Endothelial cell of umbilical vein (primary cell): ENCODE measurements at regions of chr6 and their contacts with region 1.

Region 1: DNA sequence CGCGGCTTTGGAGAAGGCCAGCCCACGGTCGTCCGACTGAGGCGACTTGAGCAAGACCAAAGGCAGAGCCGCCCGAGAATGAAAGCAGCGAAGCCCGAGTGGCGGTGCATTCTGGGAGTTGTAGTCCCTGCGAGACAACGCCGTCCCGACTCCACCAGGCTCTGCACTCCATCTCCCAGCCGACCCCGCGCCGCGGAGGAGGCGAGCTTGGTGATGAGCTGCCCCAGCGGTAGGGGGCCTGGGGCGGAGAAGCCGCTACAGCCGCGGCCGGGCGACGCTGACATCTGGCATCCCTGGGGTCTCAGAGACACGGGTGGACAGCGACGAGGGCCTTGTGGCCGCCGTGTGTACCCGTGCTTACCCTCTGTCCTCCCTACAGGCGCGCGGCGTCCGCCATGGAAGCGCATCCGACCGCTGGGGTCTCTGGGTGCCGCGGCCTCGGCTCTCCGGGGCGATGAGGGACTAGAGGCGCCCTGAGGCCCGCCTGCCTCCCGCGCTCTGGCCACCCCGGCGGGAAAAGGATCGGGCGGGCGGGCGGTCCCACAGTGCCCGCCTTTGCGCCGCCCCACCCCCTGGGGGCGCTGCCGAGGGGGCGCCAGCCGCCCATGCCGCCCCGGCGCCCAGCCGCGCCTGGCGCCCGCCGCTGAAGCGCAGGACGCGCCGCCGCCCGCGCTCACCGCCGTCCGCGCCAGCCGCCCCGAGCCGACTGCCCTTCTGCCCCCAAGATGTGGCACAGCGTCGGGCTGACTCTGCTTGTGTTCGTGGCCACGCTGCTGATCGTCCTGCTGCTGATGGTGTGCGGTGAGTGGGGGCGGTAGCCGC is at the start of gene SMIM13:
- DNase-seq: peak; percentile 99
- H3K4me3 ChIP-seq: peak within 1 kb of the TSS; percentile 54 to 98 (median 86)
- H3K27ac ChIP-seq: peak within 1 kb of the TSS; percentile 87
- H3K4me1 ChIP-seq: peaks cover 18% of the 10 kb centered on the region
- H3K27me3 ChIP-seq: no peaks in the 10 kb centered on the region
- CTCF ChIP-seq: peak; percentile 38 to 47
- POLR2A ChIP-seq: peak; percentile 68
- total RNA-seq, gene SMIM13: 14.7 and 19.4 TPM in 2 replicates

Region 2: DNA sequence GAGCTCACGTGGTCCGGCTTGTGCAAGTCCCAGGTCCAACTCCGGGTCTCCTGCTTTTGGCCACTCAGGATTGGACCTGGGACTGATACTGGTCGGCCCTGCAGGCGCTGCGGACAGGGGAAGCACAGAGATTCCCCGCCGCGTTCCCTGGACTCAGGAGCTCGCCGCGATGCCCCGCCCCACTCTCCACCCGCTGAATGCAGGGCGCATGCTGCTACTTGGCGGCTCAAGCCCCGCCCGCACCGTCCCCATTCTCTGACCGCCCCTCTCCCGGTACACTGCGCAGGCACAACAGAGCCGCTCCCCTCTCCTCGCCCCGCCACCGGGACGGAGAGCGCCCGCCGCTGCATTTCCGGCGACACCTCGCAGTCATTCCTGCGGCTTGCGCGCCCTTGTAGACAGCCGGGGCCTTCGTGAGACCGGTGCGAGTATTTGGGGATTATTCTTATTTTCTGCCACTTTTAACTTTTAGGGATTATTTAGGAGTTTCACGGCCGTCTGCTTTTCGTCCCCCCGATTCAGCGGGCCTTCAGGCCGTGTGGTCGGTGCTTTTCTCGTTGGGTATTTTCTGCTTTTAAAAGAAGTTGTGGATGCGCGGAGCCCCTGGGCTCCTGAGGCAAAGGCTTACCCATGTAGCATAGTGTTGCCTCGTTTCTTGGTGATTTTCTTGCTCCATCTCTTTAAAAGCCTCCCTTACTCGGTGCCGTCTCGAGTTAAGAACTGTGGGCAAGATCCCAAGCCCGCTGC is 370.8 kb before region 1 on chr6 and contains the start of gene TMEM14C:
- CTCF ChIA-PET with region 1: no interaction called
- POLR2A ChIA-PET with region 1: no interaction called
- dilution Hi-C with region 1: no loop called
- intact Hi-C with region 1: loop called (anchors 10 kb)
- DNase-seq: peak; percentile 98
- H3K4me3 ChIP-seq: peak within 1 kb of the TSS; percentile 59 to 79 (median 76)
- H3K27ac ChIP-seq: peak within 1 kb of the TSS; percentile 83
- H3K4me1 ChIP-seq: peaks cover 10% of the 10 kb centered on the region
- H3K27me3 ChIP-seq: no peaks in the 10 kb centered on the region
- CTCF ChIP-seq: no peak
- POLR2A ChIP-seq: peak; percentile 88
- total RNA-seq, gene TMEM14C: 68.0 and 89.3 TPM in 2 replicates

Region 3: DNA sequence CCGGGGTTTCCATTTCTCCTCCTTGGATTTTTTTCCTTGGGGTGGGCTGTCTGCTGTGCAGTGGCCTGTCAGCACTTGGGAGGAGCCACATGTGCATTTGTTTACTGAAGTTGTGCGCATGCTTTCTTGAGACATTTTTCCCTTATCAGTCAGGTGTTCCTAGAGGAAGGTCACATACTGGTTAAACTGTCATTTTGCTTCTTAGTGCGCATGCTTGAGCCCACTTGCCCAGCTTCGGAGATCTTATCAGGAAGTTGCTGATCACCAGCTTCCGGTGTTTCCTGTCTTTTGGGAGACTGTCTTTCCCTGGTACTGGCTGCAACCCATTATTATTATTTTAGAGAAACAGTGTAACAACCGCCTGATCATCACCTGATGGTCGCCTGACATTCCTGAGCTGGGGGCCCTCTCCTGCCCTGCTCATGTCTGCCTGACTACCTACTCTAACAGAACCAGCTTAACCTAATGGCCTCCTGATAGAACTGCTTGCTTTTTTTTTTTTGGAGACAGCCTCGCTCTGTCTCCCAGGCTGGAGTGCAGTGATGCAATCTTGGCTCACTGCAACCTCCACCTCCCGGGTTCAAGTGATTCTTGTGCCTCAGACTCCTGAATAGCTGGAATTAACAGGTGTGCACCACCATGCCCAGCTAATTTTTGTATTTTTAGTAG is 18.1 kb after region 1 on chr6:
- CTCF ChIA-PET with region 1: interaction called, 3 read pairs
- POLR2A ChIA-PET with region 1: no interaction called
- dilution Hi-C with region 1: no loop called
- intact Hi-C with region 1: loop called (anchors 1 kb)
- DNase-seq: peak; percentile 43
- H3K4me3 ChIP-seq: no peak overlapping the region
- H3K27ac ChIP-seq: no peak overlapping the region
- H3K4me1 ChIP-seq: peaks cover 12% of the 10 kb centered on the region
- H3K27me3 ChIP-seq: no peaks in the 10 kb centered on the region
- CTCF ChIP-seq: no peak
- POLR2A ChIP-seq: no peak

Region 4: GRCh38 chr6:11144393-11144851 is 50.6 kb after region 1 on chr6:
- CTCF ChIA-PET with region 1: interaction called, 9 read pairs
- POLR2A ChIA-PET with region 1: no interaction called
- dilution Hi-C with region 1: no loop called
- intact Hi-C with region 1: loop called (anchors 2 kb)
- DNase-seq: peak; percentile 70
- H3K4me3 ChIP-seq: no peak overlapping the region
- H3K27ac ChIP-seq: no peak overlapping the region
- H3K4me1 ChIP-seq: no peaks in the 10 kb centered on the region
- H3K27me3 ChIP-seq: no peaks in the 10 kb centered on the region
- CTCF ChIP-seq: peak; percentile 86 to 95
- POLR2A ChIP-seq: no peak

Region 5: DNA sequence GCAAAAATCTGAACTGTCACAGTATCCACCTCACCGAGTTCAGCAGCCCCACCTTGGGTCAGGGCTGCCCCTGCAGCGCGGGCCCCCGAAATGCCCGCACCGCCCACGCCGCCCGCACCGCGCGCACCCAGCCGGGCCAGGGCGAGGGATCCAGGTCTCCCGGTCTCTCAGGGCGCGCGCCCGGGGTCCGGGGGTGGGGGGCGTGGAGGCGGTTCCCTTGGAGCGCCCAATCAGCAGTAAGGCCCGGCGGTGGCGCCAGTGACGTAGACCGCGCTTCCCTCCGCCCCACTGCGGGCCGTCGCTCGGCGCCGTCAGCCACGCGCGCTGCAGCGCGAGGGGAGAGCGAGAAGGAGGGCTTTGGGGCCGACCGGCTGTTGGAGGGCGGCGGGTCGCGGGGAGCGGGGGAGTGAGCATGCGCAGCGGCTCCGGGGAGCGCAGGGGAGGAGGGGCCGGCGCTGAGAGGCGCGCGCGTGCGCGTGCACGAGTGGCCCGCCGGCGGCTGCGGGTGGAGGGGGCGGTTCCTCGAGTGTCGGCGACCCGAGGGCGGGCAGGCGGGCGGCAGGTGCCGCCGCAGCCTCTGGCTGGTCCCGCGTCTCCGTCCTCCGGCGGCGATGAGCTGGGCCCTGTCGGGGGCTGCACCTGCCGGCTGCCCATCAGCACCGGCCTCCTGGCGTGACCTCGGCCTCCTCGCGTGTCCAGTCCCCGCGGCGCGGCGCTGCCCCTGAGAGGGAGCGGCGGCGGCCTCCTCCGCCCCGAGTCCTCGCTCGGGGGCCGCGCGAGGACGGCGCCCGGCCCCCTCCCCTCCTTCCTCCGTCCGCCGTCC is 443.6 kb after region 1 on chr6 and contains the start of gene TMEM170B:
- CTCF ChIA-PET with region 1: no interaction called
- POLR2A ChIA-PET with region 1: no interaction called
- dilution Hi-C with region 1: no loop called
- intact Hi-C with region 1: loop called (anchors 2 kb)
- DNase-seq: peak; percentile 93
- H3K4me3 ChIP-seq: peak within 1 kb of the TSS; percentile 54 to 81 (median 77)
- H3K27ac ChIP-seq: peak within 1 kb of the TSS; percentile 31
- H3K4me1 ChIP-seq: peaks cover 25% of the 10 kb centered on the region
- H3K27me3 ChIP-seq: no peaks in the 10 kb centered on the region
- CTCF ChIP-seq: no peak
- POLR2A ChIP-seq: no peak
- total RNA-seq, gene TMEM170B: 4.1 and 4.2 TPM in 2 replicates

Region 6: DNA sequence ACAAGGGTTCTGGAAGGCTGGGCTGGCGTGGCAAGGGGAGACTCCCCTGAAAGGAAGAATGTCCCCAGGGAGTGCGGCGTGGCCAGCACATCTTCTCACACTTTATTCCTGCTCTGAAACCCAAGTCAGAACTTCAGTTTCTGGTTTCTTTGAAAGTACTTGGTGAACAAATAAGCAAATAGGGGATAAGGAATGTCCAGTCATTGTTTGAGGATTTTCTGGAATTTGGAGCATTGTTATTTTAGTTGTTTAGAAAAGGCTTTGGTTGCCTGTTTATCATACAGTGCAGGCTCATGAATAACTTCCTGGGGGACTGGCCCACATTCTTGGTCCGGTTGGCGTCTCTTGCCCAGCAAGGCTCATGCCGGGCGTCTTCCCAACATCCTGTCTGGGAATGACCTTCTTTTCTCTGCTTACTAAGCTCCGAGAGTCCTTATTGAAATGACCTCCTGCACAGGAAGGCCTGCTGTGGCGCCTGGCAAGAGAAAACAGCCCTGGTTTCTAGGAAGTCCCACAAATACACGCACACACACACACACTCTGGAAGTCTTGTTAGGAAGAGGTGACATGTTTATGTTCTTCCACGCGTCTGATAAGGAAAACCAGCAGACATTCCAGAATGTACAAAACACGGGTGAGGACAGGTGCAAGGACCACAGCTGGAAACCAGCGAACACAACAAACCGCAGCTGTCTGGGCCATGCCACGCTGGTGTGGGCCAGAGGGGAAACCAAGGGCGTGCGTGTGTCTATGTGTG is 515.7 kb after region 1 on chr6:
- CTCF ChIA-PET with region 1: no interaction called
- POLR2A ChIA-PET with region 1: no interaction called
- dilution Hi-C with region 1: no loop called
- intact Hi-C with region 1: no loop called
- DNase-seq: peak; percentile 99
- H3K4me3 ChIP-seq: peak overlapping the region in 2 of 3 experiments; percentile 30 to 86
- H3K27ac ChIP-seq: peak overlapping the region; percentile 99
- H3K4me1 ChIP-seq: peaks cover 78% of the 10 kb centered on the region
- H3K27me3 ChIP-seq: no peaks in the 10 kb centered on the region
- CTCF ChIP-seq: no peak
- POLR2A ChIP-seq: no peak

Region 7: DNA sequence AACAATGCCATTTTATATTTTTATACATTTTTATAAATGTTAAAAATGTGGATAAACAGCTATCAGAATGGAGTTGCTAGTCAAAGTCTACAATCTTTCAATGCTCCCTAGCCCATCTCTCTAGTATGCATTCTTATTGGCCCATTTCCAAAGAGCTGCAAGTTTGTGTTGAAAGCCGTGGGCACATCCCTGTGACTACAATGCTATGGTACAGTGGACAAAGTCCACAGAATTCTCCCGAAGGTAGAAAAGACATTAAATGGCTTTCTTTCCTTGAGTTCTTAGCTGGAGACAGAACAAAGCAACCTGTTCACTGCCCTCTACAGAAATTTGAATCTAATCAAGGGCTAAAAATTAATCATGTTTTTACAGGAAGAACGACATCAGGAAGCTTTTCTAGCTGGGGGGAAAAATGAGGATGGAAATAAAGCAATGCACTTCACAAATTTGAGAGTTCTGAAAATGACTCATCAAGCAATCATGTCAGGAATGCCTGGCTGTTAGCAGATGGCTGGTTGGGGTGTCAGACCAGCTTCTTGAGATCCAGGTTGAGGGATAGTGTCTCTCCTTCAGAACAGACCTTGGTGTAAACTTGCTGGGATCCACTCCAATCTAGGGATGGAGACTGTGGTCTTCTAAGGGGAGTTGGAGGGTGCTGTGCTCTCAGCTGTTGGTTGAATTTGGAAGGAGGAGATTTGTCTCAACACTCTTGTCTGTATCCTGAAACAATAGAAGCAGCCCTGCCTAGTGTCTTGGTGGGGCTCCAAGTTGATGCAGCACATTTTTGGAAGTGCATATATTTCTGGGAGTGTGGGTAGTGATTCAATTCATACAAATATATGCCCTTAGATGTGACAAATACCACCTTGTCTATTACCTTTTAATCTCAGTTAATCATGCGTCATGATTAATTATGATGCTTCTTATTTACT is 1479.4 kb after region 1 on chr6:
- CTCF ChIA-PET with region 1: no interaction called
- POLR2A ChIA-PET with region 1: no interaction called
- dilution Hi-C with region 1: no loop called
- intact Hi-C with region 1: loop called (anchors 5 kb)
- DNase-seq: peak; percentile 92
- H3K4me3 ChIP-seq: peak overlapping the region in 1 of 3 experiments; percentile 13
- H3K27ac ChIP-seq: peak overlapping the region; percentile 92
- H3K4me1 ChIP-seq: peaks cover 75% of the 10 kb centered on the region
- H3K27me3 ChIP-seq: no peaks in the 10 kb centered on the region
- CTCF ChIP-seq: no peak
- POLR2A ChIP-seq: no peak